Dendritic cell treated with granulocyte-macrophage colony-stimulating factor and Interleukin-4, amounts not matched to agents 40 ng/mL and 50 ng/mL, for 4 days (primary cell): ENCODE measurements at regions of chr4 and their contacts with region 1.

Region 1: DNA sequence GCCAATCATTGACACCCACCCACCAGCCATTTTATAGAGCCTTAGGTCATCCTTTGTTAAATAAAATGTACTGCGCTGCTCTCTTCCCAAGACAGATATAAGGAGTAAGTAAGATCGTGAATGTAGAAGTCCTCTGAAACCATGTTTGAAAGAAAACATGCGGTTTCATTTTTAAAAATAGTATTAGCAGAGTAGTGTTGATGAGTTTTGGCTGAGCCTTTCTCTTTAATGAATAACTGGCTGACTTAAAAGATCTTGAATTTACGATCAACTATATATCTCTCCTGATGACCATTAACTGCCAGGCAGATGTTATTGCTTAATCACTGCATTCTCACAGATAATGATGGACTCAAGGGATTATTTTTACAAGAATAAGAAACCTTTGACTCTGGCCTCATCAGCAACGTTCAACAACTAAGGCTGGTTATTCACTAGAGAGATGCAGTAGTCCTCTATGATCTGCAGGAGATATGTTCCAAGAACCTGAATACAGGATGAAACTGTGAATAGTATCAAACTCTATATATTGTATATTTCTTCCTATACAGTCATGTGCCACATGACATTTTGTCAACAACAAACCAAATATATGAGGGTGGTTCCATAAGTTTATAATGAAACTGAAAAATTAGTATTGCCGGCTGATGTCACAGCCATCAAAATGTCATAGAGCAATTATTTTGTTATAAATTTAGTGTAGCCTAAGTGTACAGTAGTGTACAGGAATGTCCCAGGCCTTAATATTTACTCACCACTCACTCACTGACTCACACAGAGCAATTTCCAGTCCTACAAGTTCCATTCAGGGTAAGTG is 80.8 kb downstream of the FAM13A start:
- H3K4me3 Mint-ChIP-seq: no peak overlapping the region
- H3K27ac Mint-ChIP-seq: no peak overlapping the region
- H3K4me1 Mint-ChIP-seq: no peaks in the 10 kb centered on the region
- H3K27me3 Mint-ChIP-seq: no peaks in the 10 kb centered on the region

Region 2: GRCh38 chr4:88870428-88870827 is 105.7 kb before region 1 on chr4:
- intact Hi-C with region 1: no loop called
- H3K4me3 Mint-ChIP-seq: no peak overlapping the region
- H3K27ac Mint-ChIP-seq: no peak overlapping the region
- H3K4me1 Mint-ChIP-seq: peaks cover 17% of the 10 kb centered on the region
- H3K27me3 Mint-ChIP-seq: peaks cover 48% of the 10 kb centered on the region

Region 3: GRCh38 chr4:88900432-88900831 is 75.7 kb before region 1 on chr4:
- intact Hi-C with region 1: no loop called
- H3K4me3 Mint-ChIP-seq: no peak overlapping the region
- H3K27ac Mint-ChIP-seq: no peak overlapping the region
- H3K4me1 Mint-ChIP-seq: peaks cover 10% of the 10 kb centered on the region
- H3K27me3 Mint-ChIP-seq: no peaks in the 10 kb centered on the region

Region 4: DNA sequence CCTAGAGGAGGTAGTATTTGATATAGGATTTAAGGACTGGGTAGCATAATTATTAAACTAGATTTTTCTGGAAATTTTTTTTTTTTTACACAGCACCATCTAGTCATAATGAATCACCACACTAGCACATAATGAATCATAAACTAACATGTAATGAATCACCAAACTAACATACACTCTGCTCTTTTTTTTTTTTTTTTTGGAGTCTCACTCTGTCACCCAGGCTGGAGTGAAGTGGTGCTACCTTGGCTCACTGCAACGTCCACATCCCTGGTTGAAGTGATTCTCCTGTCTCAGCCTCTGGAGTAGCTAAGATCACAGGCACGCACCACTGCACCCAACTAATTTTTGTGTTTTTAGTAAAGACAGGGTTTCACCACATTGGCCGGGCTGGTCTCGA is 11.7 kb before region 1 on chr4:
- intact Hi-C with region 1: loop called (anchors 1 kb)
- H3K4me3 Mint-ChIP-seq: no peak overlapping the region
- H3K27ac Mint-ChIP-seq: no peak overlapping the region
- H3K4me1 Mint-ChIP-seq: peaks cover 21% of the 10 kb centered on the region
- H3K27me3 Mint-ChIP-seq: no peaks in the 10 kb centered on the region